Activated CD4-positive, alpha-beta T cell treated with anti-CD3 and anti-CD28 coated beads for 36 hours (primary cell): ENCODE measurements at regions of chr1 and their contacts with region 1.

Region 1: GRCh38 chr1:158969855-158970254 is 38.5 kb downstream of the PYHIN1 start:
- DNase-seq: peak; percentile 25
- ATAC-seq: peak; percentile 72
- H3K4me3 Mint-ChIP-seq: no peak overlapping the region
- H3K27ac Mint-ChIP-seq: peak overlapping the region; percentile 88
- H3K4me1 Mint-ChIP-seq: peaks cover 25% of the 10 kb centered on the region
- H3K27me3 Mint-ChIP-seq: peaks cover 3% of the 10 kb centered on the region

Region 2: DNA sequence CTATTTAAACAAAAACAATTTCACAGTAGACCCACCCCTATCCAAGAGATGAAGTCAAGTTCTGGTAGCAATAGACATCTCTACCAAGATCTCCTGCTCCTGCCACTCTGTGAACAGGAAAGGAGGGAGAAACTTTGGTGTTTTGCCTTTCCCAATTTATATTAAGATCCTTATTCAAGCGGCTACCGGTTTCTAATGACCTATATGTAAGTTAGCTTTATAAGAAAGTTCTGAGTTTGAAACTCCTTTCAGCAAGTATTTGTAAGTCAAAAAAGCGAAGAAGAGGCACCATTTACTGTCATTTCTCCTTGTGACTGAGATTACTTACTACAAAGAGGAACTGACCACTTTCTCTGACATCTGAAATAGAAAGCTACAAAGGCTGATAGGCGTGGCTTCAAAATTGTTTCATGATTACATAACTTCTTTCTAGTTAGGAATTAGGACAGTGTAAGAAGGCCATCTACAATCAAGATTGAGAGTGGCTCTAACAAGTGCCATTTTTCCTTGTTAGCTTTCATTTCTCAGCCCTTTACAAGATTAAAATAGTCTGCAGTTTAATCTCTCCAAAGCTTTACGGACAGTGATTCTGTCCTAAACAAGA is 138.8 kb before region 1 on chr1 and contains the start of gene MNDA:
- CTCF ChIA-PET with region 1: no interaction called
- POLR2A ChIA-PET with region 1: no interaction called
- intact Hi-C with region 1: loop called in 1 of 2 experiments (anchors 5 kb)
- DNase-seq: no peak
- ATAC-seq: peak; percentile 42
- H3K4me3 Mint-ChIP-seq: no peak within 1 kb of the TSS
- H3K27ac Mint-ChIP-seq: no peak within 1 kb of the TSS
- H3K4me1 Mint-ChIP-seq: peaks cover 19% of the 10 kb centered on the region
- H3K27me3 Mint-ChIP-seq: peaks cover 2% of the 10 kb centered on the region
- total RNA-seq, gene MNDA: not detected

Region 3: DNA sequence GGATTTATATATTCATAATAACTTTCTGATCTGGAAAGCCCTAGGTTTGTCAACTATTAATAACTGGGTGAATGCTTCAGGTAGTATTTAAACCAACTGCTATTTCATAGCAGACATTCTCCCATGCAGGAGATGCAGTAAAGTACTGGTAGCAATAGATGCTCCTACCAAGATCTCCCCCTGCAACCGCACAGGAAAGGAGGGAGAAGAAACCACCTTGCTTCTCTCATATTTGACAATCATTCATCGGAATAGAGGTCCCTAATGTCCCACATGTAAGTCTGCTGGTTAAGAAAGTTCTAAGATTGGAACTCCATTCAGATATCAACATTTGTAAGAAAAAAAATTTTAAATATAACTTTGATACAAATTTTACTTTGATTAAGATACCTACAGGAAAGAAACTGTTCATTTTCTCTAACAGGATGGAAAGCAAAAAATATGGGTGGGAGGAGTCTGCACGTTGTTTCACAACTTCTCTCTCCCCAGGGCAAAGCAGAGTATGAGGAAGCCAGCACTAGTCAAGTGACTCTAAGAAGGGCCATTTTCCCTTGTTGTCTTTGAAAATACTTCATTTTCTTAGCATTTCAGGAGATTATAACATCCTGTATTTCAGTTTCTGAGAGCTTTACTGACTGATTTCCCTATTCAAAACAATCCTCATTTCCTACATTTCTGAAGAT is 38.7 kb before region 1 on chr1 and contains the start of gene PYHIN1:
- CTCF ChIA-PET with region 1: no interaction called
- POLR2A ChIA-PET with region 1: no interaction called
- intact Hi-C with region 1: loop called (anchors 1 kb)
- DNase-seq: peak; percentile 30
- ATAC-seq: peak; percentile 79
- H3K4me3 Mint-ChIP-seq: peak within 1 kb of the TSS; percentile 65
- H3K27ac Mint-ChIP-seq: peak within 1 kb of the TSS; percentile 75
- H3K4me1 Mint-ChIP-seq: peaks cover 32% of the 10 kb centered on the region
- H3K27me3 Mint-ChIP-seq: peaks cover 3% of the 10 kb centered on the region
- total RNA-seq, gene PYHIN1: 5.6 to 6.8 TPM

Region 4: DNA sequence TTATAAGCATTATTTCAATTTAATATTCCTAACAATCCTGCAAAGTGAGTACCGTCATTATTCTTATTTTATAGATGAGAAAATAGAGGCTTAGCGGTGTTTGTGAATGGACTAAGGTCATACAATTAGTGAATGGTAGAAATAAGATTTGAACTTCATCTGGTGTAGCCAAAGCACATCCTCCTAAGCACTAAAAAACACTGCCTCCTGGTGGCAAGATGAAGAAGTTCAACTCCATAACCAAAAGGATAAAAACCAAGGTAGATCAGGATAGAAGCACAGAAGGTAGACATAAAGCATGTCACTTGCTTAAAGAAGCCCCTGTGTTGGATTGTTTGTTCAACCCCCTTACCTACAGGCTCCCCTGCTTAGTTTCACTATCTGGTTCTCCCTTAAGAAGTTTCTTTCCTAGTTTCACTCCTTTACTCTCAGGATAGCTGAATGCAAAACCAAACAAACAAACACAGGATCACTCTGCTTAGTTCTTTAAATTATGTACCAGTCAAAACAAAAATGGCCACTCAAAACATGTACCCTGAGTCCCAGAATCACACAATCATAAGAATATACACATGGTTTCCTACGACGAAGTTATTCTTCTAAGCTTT is 119.4 kb after region 1 on chr1:
- CTCF ChIA-PET with region 1: no interaction called
- POLR2A ChIA-PET with region 1: no interaction called
- intact Hi-C with region 1: loop called in 1 of 2 experiments (anchors 1 kb)
- DNase-seq: no peak
- ATAC-seq: peak; percentile 37
- H3K4me3 Mint-ChIP-seq: no peak overlapping the region
- H3K27ac Mint-ChIP-seq: peak overlapping the region; percentile 78
- H3K4me1 Mint-ChIP-seq: peaks cover 51% of the 10 kb centered on the region
- H3K27me3 Mint-ChIP-seq: peaks cover 2% of the 10 kb centered on the region